ENCODE measurements at regions of chr5 and their contacts with region 1.

Region 1: DNA sequence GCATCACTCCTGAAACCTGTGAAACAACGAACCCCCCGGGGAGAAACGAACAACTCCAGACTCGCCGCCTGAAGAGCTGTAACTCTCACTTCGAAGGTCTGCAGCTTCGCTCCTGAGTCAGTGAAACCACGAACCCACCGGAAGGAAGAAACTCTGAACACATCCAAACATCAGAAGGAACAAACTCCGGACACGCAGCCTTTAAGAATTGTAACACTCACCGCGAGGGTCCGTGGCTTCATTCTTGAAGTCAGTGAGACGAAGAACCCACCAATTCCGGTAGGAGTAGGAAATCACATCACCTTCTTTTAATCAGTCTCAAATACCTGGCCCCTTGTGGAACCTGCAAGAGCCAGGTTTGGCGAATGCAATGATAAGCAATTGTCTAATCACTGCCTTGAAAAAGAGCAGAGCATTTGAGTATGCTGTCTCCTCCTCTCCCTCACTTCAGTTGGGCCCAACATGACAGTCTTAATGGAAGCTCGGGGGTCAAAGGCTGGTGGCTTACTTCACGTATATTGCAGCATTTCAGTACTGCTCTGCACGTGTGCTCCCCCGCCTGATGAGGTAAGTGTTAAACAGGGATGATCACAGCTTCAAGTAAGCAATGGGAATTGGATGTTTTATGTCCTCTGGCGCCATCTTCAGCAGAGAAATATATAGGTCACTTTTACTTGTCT is 473 bp downstream of the IRGM start:
- DNase-seq: peak; percentile 92
- H3K4me3 Mint-ChIP-seq: no peak overlapping the region
- H3K27ac Mint-ChIP-seq: no peak overlapping the region
- H3K4me1 Mint-ChIP-seq: no peaks in the 10 kb centered on the region
- H3K27me3 Mint-ChIP-seq: no peaks in the 10 kb centered on the region
- CTCF ChIP-seq: peak; percentile 85

Region 2: DNA sequence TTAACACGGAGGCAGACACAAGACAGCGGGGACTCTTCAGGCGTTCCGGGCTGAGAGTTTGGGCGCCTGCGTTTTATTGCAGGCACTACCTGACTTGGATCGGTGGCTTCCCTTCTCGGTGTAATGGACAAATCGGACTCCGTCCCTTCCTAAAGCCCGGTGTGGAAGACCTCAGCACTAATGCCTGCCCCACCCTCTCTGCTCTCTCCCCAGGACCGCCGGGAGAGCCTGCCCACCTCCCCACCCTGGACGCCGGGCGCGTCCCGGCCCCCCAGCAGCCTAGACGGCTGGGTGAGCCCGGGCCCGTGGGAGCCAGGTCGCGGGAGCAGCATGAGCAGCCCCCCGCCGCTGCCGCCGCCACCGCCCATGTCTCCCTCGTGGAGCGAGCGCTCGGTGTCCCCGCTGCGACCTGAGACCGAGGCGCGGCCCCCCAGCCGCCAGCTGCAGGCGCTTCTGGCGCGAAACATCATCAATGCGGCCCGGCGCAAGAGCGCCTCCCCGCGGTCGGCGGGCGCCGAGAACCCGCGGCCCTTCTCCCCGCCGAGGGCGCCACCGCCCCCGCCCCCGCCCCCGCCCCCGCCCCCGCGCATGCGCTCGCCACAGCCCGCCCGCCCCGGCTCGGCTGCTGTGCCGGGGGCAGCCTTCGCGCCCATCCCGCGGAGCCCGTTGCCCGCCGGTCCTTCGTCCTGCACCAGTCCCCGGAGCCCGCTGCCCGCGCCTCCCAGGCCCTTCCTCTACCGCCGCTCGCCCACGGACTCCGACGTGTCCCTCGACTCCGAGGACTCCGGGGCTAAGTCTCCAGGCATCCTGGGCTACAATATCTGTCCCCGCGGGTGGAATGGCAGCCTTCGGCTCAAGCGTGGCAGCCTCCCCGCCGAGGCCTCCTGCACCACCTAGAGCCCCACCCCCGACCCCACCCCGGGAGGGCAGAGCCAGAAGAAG is 190.3 kb before region 1 on chr5:
- CTCF ChIA-PET with region 1: interaction called, 9 read pairs
- POLR2A ChIA-PET with region 1: no interaction called
- intact Hi-C with region 1: loop called (anchors 1 kb)
- DNase-seq: peak; percentile 58
- H3K4me3 Mint-ChIP-seq: peak overlapping the region; percentile 71
- H3K27ac Mint-ChIP-seq: no peak overlapping the region
- H3K4me1 Mint-ChIP-seq: peaks cover 14% of the 10 kb centered on the region
- H3K27me3 Mint-ChIP-seq: peaks cover 11% of the 10 kb centered on the region
- CTCF ChIP-seq: peak; percentile 99

Region 3: GRCh38 chr5:150751096-150751891 is 95.5 kb before region 1 on chr5:
- CTCF ChIA-PET with region 1: interaction called, 14 read pairs
- POLR2A ChIA-PET with region 1: interaction called, 26 read pairs
- intact Hi-C with region 1: no loop called
- DNase-seq: no peak
- H3K4me3 Mint-ChIP-seq: no peak overlapping the region
- H3K27ac Mint-ChIP-seq: peak overlapping the region; percentile 16
- H3K4me1 Mint-ChIP-seq: peaks cover 8% of the 10 kb centered on the region
- H3K27me3 Mint-ChIP-seq: no peaks in the 10 kb centered on the region
- CTCF ChIP-seq: no peak

Region 4: DNA sequence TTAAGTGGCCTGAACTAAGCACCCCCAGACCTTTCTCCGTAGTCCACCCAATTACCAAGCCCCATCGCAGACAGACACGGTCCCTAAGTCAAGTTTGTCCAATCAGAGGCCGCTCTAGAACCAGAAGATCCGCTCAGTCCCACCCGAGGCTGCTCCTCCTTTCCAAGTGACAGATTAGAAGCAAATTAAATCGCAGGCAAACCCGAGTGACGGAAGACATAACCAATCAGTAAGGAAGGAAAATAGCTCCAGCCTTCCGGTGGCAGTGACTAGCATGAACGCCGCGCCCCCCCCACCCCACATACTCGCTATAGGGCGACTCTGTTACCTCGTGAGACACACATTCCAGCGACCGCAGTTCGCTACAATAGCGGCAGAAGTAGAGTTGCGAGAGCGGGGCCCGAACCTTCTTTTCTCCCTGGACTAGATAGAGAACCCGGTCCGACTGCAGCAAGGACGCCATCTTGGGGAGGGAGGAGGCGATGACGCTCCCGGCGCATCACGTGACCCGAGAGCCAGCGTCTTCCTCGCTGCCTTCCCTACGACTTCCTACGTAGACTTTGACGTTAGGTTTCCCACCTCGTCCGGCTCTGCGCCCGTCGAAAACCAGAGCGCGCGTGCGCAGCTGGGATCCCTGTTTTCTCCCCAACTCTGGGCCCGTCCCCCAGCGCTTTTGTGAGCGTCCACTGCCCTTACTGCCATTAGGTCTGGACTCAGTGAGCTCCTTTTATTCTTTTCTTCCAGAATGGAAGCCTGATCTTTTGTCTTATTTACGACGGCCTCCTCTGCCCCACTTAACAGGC is 88.1 kb before region 1 on chr5 and contains the start of gene DCTN4:
- CTCF ChIA-PET with region 1: interaction called, 92 read pairs
- POLR2A ChIA-PET with region 1: interaction called, 26 read pairs
- intact Hi-C with region 1: loop called (anchors 1 kb)
- DNase-seq: peak; percentile 100
- H3K4me3 Mint-ChIP-seq: no peak within 1 kb of the TSS
- H3K27ac Mint-ChIP-seq: no peak within 1 kb of the TSS
- H3K4me1 Mint-ChIP-seq: peaks cover 34% of the 10 kb centered on the region
- H3K27me3 Mint-ChIP-seq: no peaks in the 10 kb centered on the region
- CTCF ChIP-seq: no peak
- total RNA-seq, gene DCTN4: 122 and 143 TPM in 2 replicates

Region 5: GRCh38 chr5:150789943-150790611 is 56.7 kb before region 1 on chr5:
- CTCF ChIA-PET with region 1: interaction called, 25 read pairs
- POLR2A ChIA-PET with region 1: interaction called, 3 read pairs
- intact Hi-C with region 1: no loop called
- DNase-seq: peak; percentile 100
- H3K4me3 Mint-ChIP-seq: peak overlapping the region; percentile 65
- H3K27ac Mint-ChIP-seq: peak overlapping the region; percentile 95
- H3K4me1 Mint-ChIP-seq: peaks cover 48% of the 10 kb centered on the region
- H3K27me3 Mint-ChIP-seq: no peaks in the 10 kb centered on the region
- CTCF ChIP-seq: no peak